AG04449 (cell line): ENCODE measurements at regions of chr2 and their contacts with region 1.

Region 1: DNA sequence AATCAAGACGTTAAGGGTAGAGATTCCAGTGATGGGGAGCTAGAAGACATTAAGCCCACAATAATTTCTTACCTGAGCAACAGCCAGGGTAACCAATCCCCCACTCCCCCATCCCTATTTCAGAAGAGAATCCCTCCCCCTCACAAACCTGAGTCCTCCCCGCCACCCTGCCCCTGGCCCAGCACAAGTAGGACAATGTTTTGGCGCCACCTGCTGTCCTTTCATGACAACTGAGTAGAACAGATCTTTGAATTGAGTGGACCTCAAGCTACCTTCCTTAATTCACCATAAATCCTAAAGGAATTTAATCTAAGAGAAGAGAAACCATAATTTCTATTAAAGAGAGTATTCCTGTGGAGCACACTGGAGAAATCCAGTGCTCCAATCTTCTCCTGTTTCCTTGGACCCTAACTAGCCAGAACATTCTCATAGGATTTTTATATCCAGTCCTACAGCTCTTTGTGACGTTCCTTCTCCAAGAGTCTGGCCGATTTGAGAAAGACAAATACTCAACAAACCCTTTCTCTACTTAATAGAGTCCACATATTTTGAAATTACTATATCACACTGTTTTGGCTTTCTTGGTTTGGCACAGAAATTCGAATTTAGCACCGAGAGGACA is 41.1 kb downstream of the NHEJ1 start:
- DNase-seq: no peak
- H3K4me3 ChIP-seq: no peak overlapping the region
- CTCF ChIP-seq: peak; percentile 69

Region 2: GRCh38 chr2:217902379-217903141 is 1217.0 kb before region 1 on chr2:
- CTCF ChIA-PET with region 1: no interaction called
- POLR2A ChIA-PET with region 1: no interaction called
- DNase-seq: no peak
- H3K4me3 ChIP-seq: no peak overlapping the region
- CTCF ChIP-seq: no peak

Region 3: DNA sequence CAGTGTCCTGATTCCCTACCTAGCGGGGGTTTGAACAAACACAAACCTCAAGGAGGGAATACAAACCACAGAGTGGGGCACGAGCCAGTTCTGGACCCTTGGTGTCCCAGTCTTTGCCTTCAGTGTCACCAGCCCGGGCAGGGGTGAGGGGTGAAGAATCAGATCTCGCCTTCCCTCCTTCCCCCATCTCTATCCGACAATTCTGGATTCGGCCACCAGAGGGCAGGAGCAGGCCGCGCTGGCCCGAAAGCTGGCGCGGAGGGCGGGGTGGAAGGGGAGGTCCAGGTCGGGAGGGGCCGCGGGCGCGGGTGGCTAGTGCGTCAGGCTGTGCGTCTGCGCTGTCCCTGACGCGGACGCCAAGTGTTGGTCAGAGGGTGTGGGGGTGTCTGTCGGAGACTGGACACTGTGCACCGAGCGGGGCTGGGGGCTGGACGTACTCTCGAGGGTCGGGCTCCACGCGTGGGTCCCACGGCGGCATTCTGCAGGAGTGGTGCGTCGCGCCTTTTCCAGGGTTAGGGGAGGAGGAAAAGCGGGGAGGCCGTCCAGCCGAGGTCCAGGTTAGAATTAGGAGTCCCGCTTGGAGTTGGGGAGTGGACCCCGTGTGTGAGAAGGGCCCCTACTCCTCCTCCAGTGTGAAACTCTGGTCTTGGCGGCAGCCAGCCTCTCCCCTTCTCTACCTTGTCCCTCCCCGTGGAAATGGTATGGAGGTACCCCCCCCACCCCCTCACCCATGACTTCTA is 123.4 kb before region 1 on chr2:
- CTCF ChIA-PET with region 1: interaction called, 17 read pairs
- POLR2A ChIA-PET with region 1: no interaction called
- DNase-seq: no peak
- H3K4me3 ChIP-seq: peak overlapping the region; percentile 50
- CTCF ChIP-seq: peak; percentile 90

Region 4: GRCh38 chr2:219041252-219041651 is 78.3 kb before region 1 on chr2 and contains the start of gene CFAP65:
- CTCF ChIA-PET with region 1: interaction called, 11 read pairs
- POLR2A ChIA-PET with region 1: no interaction called
- DNase-seq: no peak
- H3K4me3 ChIP-seq: peak within 1 kb of the TSS; percentile 56
- CTCF ChIP-seq: no peak

Region 5: GRCh38 chr2:219079417-219079816 is 40.1 kb before region 1 on chr2:
- CTCF ChIA-PET with region 1: interaction called, 709 read pairs
- POLR2A ChIA-PET with region 1: no interaction called
- DNase-seq: no peak
- H3K4me3 ChIP-seq: no peak overlapping the region
- CTCF ChIP-seq: no peak

Region 6: DNA sequence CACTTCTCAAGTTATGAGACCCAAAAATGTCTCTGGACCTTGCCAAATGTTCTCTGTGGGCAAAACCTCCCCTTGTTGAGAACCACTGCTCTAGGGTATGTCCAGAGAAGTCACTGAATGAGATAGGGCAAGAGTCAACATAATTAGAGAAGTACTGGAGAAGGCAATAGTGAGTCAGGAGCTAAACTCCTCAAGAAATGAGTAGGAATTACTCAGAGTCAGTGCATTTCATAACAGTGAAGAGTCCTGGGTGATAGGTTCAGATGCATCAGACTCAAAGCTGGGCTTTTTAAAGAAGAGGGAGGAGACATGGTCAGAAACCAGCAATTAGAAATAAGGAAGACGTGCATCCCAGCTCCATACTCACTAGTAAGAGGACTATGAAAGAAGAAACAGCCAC is 20.2 kb before region 1 on chr2:
- CTCF ChIA-PET with region 1: interaction called, 30 read pairs
- POLR2A ChIA-PET with region 1: no interaction called
- DNase-seq: peak; percentile 28
- H3K4me3 ChIP-seq: no peak overlapping the region
- CTCF ChIP-seq: no peak

Region 7: GRCh38 chr2:219109471-219109870 is 10.1 kb before region 1 on chr2:
- CTCF ChIA-PET with region 1: interaction called, 46 read pairs
- POLR2A ChIA-PET with region 1: no interaction called
- DNase-seq: no peak
- H3K4me3 ChIP-seq: no peak overlapping the region
- CTCF ChIP-seq: no peak

Region 8: DNA sequence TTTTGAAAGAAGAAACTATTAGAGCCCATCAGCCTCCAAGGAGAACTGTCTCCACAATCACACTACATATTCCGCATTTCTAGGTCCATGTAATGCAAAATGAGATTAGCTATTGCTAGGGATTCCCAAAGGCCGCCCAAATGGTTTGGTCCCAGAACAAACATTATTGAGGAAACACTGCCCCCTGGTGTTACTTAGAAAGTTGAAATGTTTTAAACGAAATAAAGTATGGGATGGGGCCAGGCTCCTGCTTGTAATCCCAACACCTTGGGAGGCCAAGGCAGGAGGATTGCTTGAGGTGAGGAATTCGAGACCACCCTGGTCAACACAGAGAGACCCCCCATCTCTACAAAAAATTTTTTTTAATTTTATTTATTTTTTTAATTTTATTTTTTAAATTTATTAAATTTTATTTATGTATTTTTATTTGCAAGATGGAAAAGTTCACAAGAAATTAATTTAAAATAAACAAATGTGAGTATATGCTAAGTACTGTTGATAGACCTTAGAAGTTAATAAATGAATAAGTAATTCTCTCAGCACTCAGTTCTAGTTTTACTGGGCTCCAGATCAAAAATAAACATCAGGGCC is 35.6 kb after region 1 on chr2:
- CTCF ChIA-PET with region 1: interaction called, 58 read pairs
- POLR2A ChIA-PET with region 1: no interaction called
- DNase-seq: no peak
- H3K4me3 ChIP-seq: no peak overlapping the region
- CTCF ChIP-seq: peak; percentile 34

Region 9: DNA sequence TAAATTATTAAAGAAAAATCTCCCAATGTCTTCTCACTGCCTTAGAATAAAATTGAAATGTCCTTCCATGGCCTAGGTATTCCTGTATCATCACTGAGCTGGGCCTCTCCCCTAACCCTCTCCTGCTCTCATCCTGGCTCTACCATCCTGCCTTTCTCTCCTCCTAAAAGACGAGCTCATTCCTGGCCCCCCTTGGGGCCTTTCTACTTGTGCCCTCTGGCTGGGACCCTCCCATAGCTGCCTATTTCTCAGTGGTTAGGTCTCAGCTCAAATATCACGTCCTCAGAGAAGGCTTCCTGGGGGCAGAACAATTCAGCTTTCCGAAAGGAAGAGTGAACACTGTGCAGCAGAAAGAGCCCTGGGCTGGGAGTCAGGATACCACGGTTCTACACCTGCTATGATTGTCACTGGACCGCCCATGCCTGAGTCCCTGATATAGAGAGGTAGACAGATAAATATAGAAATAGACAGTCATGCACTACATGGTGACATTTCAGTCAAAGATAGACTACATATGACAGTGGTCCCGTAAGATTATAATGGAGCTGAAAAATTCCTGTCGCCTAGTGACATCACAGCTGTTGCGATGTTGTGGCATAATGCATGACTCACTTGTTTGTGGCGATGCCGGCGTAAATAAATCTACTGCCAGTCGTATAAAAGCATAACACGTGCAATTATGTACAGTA is 258.8 kb after region 1 on chr2:
- CTCF ChIA-PET with region 1: no interaction called
- POLR2A ChIA-PET with region 1: no interaction called
- DNase-seq: no peak
- H3K4me3 ChIP-seq: no peak overlapping the region
- CTCF ChIP-seq: no peak

Region 10: DNA sequence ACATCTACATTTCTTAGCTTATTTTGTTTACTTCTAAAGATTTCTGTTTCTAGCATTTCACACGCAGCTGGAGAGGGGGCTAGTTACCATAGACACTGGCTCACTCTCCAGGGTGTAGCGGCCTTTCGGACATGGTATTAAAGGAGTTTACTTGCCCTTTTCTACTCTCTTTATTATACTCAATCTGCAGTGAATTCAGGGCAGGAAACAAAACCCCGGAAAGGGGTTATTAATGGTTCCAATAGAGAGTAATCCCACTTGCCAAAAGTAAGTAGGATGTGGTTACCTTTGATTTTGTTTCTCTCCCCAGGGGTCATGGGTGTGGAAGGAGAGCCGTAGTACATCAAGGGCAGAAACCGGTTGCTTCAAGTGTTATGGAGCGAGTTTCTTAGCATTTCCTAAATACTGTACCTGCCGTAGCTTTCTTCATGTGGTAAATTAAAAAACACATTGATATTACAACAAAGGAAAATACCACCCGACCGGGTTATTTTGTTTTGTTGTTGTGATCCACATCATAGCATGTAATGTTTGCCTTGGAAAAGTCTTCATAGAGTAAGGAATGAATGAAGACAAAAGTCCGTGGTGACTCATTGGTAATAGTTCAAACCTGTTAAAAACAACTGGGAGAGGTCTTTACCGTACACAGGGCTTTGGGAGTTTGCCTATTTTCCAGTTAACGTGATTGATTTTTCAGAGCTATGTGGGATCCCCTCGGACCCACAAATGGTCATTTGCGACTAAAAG is 579.3 kb after region 1 on chr2:
- CTCF ChIA-PET with region 1: no interaction called
- POLR2A ChIA-PET with region 1: no interaction called
- DNase-seq: no peak
- H3K4me3 ChIP-seq: no peak overlapping the region
- CTCF ChIP-seq: no peak